Heart right ventricle (tissue), 16 donors: ENCODE measurements at regions of chr9 and their contacts with region 1.

Region 1: GRCh38 chr9:137223078-137223970 is 1.3 kb upstream of the RNF208 start:
- DNase-seq: peak; percentile 96 to 98
- ATAC-seq: peak; percentile 90 to 97 (median 95)
- H3K4me3 ChIP-seq: peak overlapping the region; percentile 64 to 94 (median 76)
- H3K27ac ChIP-seq: peak overlapping the region; percentile 70 to 96 (median 92)
- H3K4me1 ChIP-seq: peaks cover 14 to 46% (median 32%) of the 10 kb centered on the region in 9 donors
- H3K27me3 ChIP-seq: peaks cover 0 to 8% (median 4%) of the 10 kb centered on the region in 7 donors
- CTCF ChIP-seq: no peak

Region 2: DNA sequence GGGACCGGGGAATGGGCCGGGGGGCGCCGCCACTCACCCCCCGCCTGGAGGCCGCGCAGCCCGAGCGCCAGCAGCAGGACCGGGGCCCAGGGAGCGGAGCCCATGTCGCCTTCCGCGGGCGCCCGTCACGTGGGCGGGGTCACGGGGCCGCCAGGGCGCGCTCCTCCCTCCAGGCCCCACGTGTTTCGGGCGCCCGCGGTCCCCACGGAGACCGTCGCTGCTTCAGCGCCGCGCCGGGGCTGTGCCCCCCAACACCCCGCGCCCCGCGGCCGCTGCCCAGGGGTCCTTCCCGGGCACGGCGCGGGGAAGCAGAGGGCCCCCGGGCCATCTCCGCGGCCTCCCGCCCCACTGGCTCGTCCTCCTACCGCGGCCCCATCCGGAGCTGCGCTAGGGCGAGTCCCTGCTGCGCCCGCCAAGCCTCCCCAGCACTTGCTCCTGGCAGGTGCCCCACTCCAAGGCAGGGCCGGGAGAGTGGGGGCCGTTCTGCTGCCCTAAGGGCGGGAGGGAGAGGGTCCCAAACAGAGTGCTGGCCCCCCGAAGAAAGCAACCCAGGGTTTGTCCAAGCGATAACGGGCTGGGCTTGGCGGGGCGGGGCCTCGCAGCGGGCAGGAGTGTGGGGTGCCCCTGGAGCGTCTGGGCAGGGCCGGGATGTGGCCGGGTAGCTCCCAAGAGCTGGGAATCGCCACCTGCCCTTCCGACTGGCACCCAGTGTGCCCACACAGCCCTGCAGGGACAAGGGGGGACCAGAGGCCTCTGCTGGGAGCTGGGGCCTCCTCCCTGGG is 108.5 kb before region 1 on chr9 and contains the start of gene DPP7:
- intact Hi-C with region 1: loop called in 3 of 10 experiments (anchors 1 to 5 kb)
- DNase-seq: peak; percentile 73 to 80
- ATAC-seq: peak; percentile 66 to 91 (median 84)
- H3K4me3 ChIP-seq: peak within 1 kb of the TSS; percentile 66 to 95 (median 86)
- H3K27ac ChIP-seq: peak within 1 kb of the TSS; percentile 62 to 95 (median 78)
- H3K4me1 ChIP-seq: peaks cover 12 to 40% (median 23%) of the 10 kb centered on the region in 9 donors
- H3K27me3 ChIP-seq: no peaks in the 10 kb centered on the region
- CTCF ChIP-seq: no peak
- total RNA-seq, gene DPP7: 91.4 to 167 (median 118) TPM

Region 3: DNA sequence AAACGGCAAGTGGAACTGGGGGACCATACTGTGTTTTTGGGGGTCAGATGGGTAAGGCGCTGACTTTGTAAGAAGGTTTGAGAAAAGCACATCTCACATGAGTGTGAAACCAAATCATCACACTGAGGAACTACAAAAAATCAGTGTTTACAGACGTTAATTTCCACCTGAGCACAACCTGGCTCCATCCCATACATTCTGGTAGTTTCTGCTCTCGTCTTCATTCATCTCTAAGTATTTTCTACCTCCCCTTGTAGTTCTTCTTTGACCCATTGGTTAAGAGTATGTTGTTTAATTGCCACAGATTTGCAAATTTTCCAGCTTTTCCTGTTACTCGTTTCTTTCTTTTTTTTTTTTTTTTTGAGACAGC is 99.9 kb before region 1 on chr9:
- intact Hi-C with region 1: loop called in 9 of 10 experiments (anchors 1 to 5 kb)
- DNase-seq: no peak
- ATAC-seq: no peak
- H3K4me3 ChIP-seq: no peak overlapping the region
- H3K27ac ChIP-seq: no peak overlapping the region
- H3K4me1 ChIP-seq: peaks cover 8 to 25% (median 21%) of the 10 kb centered on the region in 9 donors
- H3K27me3 ChIP-seq: no peaks in the 10 kb centered on the region
- CTCF ChIP-seq: no peak

Region 4: DNA sequence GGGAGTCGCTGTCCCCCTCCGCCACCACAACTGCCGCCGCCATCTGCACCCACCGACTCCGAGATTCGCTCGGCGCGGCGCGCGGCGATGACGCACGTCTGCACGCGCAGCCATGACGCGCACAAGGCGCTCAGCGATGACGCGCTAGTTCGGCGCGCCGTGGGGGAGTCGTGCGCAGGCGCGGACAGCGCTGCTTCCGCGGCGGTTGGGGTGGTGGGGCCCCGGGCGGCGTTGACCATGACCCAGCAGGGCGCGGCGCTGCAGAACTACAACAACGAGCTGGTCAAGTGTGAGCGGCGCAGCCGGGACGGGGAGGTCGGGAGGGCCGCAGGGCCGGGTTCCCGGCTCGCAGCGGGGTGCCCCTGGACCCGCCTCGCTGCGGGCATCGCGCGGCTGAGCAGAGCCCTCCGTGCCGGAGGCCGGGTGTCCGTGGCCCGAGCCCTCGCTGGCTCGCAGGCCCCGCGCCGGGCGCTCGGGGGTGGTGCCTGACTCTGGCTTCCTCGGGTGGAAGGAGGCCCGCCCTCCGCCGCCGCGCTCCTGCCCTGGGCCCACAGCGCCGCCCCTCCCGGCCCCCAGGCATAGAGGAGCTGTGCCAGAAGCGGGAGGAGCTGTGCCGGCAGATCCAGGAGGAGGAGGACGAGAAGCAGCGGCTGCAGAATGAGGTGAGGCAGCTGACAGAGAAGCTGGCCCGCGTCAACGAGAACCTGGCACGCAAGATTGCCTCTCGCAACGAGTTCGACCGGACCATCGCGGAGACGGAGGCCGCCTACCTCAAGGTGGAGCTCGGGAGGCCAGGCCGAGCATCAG is 34.6 kb before region 1 on chr9 and contains the starts of genes ANAPC2 and SSNA1:
- intact Hi-C with region 1: loop called in 9 of 10 experiments (anchors 1 to 5 kb)
- DNase-seq: peak; percentile 90 to 96
- ATAC-seq: peak; percentile 88 to 95 (median 91)
- H3K4me3 ChIP-seq: peak within 1 kb of the TSS; percentile 75 to 99 (median 98)
- H3K27ac ChIP-seq: peak within 1 kb of the TSS; percentile 94 to 100 (median 98)
- H3K4me1 ChIP-seq: peaks cover 28 to 62% (median 47%) of the 10 kb centered on the region in 9 donors
- H3K27me3 ChIP-seq: no peaks in the 10 kb centered on the region
- CTCF ChIP-seq: peak in 6 of 9 donors; percentile 9 to 52 (median 39)
- total RNA-seq, gene ANAPC2: 24.6 to 44.8 (median 27.7) TPM
- total RNA-seq, gene SSNA1: 47.3 to 73.5 (median 56.7) TPM

Region 5: GRCh38 chr9:137194388-137194787 is 28.9 kb before region 1 on chr9:
- intact Hi-C with region 1: loop called in 8 of 10 experiments (anchors 2 to 5 kb)
- DNase-seq: peak; percentile 77 to 78
- ATAC-seq: peak; percentile 54 to 89 (median 74)
- H3K4me3 ChIP-seq: peak overlapping the region in 6 of 10 donors; percentile 5 to 30 (median 17)
- H3K27ac ChIP-seq: peak overlapping the region in 9 of 10 donors; percentile 9 to 83 (median 74)
- H3K4me1 ChIP-seq: peaks cover 34 to 88% (median 62%) of the 10 kb centered on the region in 9 donors
- H3K27me3 ChIP-seq: no peaks in the 10 kb centered on the region
- CTCF ChIP-seq: no peak

Region 6: GRCh38 chr9:137200311-137201204 is 22.8 kb before region 1 on chr9 and contains the start of gene TPRN:
- intact Hi-C with region 1: loop called in 1 of 10 experiments (anchors 2 kb)
- DNase-seq: peak; percentile 99 to 100
- ATAC-seq: peak; percentile 95 to 99 (median 98)
- H3K4me3 ChIP-seq: peak within 1 kb of the TSS; percentile 42 to 84 (median 72)
- H3K27ac ChIP-seq: peak within 1 kb of the TSS; percentile 48 to 96 (median 90)
- H3K4me1 ChIP-seq: peaks cover 50 to 86% (median 76%) of the 10 kb centered on the region in 9 donors
- H3K27me3 ChIP-seq: no peaks in the 10 kb centered on the region
- CTCF ChIP-seq: no peak
- total RNA-seq, gene TPRN: 10.2 to 31.5 (median 21.7) TPM

Region 7: GRCh38 chr9:137240861-137241489 is 17.7 kb after region 1 on chr9 and contains the start of gene TUBB4B:
- intact Hi-C with region 1: loop called in 1 of 10 experiments (anchors 2 kb)
- DNase-seq: peak; percentile 99 to 100
- ATAC-seq: peak; percentile 85 to 94 (median 89)
- H3K4me3 ChIP-seq: peak within 1 kb of the TSS; percentile 75 to 97 (median 92)
- H3K27ac ChIP-seq: peak within 1 kb of the TSS; percentile 91 to 100 (median 98)
- H3K4me1 ChIP-seq: peaks cover 16 to 71% (median 53%) of the 10 kb centered on the region in 9 donors
- H3K27me3 ChIP-seq: no peaks in the 10 kb centered on the region
- CTCF ChIP-seq: no peak
- total RNA-seq, gene TUBB4B: 211 to 495 (median 330) TPM